ENCODE measurements at regions of chr12 and their contacts with region 1.

Region 1: DNA sequence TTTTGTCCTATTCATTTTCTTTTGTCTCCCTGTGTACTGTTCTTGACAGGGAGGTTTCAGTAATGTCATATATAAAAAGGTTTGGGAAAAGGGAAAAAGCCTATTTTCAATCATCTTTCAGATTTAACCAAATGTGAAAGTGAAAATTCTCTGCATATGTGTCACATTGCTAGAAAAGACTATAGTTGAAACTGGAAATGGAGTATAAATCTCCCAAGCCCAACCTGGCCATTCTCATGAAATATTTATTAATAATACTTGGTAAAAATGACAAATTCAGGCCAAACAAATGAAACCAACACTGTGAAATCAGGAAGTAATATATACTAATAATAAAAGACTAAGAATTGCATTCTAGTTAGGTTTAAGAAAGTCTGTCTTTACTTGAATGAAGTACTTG is 1129.2 kb downstream of the SLC16A7 start:
- DNase-seq: no peak
- ATAC-seq: no peak
- H3K4me3 ChIP-seq: no peak overlapping the region
- H3K27ac ChIP-seq: no peak overlapping the region
- H3K4me1 ChIP-seq: no peaks in the 10 kb centered on the region
- H3K27me3 ChIP-seq: no peaks in the 10 kb centered on the region
- CTCF ChIP-seq: no peak

Region 2: DNA sequence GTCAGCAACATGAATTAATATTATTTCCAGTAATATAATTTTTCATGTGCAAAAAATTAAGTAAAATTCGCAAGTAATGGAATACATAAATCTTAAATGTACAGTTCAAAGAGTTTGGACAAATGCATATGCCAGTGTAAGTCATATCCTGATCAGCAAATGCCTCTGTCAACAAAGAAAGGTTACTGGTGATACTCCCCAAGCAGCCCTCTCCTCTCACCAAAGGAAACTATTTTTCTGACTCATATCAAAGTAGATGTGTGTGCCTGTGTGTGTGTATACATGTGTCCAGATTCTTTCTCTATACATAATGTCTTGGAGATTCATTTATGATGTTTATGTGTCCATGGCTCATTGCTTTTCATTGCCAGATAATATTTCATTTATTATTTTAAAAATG is 94.2 kb before region 1 on chr12:
- intact Hi-C with region 1: loop called in 1 of 10 experiments (anchors 5 kb)
- DNase-seq: no peak
- ATAC-seq: no peak
- H3K4me3 ChIP-seq: no peak overlapping the region
- H3K27ac ChIP-seq: no peak overlapping the region
- H3K4me1 ChIP-seq: no peaks in the 10 kb centered on the region
- H3K27me3 ChIP-seq: no peaks in the 10 kb centered on the region
- CTCF ChIP-seq: no peak